Right ventricle myocardium superior (tissue), 1 donor: ENCODE measurements at regions of chr5 and their contacts with region 1.

Region 1: DNA sequence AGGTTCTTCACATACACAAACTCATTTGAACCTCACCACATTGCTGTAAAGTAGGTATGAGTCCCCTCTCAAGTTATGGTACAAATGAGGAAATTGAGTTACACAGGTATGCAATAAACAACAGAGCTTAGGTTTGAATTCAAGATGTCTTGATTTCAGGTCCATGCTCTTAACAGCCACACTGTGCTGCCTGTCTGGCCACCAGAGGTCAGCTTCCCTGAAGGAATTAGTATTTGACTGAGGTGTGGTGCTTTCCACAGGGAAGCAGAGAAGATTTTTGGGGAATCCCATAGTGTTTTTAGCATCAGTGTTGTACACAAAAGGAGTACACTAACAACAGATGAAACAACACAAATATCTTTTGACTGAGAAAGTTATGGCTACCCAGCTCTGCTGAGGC is 94.4 kb upstream of the ITGA1 start:
- DNase-seq: peak; percentile 48
- ATAC-seq: peak; percentile 62

Region 2: GRCh38 chr5:52870448-52870847 is 177.2 kb after region 1 on chr5:
- intact Hi-C with region 1: no loop called
- DNase-seq: no peak
- ATAC-seq: peak; percentile 29

Region 3: DNA sequence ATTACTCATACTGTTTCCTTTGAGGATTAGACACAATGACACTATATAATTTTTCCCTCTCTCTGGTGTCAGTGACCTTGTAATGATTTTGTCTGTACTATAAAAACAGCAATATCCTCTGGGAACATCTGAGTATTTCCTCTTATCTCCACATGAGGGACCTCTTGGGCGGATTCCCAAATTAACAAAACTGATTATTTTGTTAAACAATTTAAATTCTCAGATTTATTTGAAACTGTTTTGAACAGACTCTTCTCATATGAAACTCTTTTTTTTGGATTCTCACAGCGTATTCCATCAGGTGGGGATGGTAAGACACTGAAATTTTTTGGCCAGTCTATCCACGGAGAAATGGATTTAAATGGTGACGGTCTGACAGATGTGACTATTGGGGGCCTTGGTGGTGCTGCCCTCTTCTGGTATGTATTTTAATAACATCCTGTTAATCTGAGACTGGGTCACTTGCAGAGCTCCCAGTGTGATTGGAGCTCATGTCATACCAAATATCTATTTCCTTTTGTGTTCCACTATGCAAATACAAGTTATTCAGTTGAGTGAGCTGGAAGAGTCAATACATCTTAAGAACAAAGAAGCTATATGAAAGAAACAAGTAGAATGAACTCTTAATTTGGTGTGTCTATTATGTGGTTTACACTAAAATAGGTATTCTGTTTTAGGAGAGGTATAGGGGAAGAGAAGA is 222.0 kb after region 1 on chr5:
- intact Hi-C with region 1: loop called (anchors 5 kb)
- DNase-seq: peak; percentile 39
- ATAC-seq: peak; percentile 98